Heart right ventricle (tissue), 16 donors: ENCODE measurements at regions of chr6 and their contacts with region 1.

Region 1: DNA sequence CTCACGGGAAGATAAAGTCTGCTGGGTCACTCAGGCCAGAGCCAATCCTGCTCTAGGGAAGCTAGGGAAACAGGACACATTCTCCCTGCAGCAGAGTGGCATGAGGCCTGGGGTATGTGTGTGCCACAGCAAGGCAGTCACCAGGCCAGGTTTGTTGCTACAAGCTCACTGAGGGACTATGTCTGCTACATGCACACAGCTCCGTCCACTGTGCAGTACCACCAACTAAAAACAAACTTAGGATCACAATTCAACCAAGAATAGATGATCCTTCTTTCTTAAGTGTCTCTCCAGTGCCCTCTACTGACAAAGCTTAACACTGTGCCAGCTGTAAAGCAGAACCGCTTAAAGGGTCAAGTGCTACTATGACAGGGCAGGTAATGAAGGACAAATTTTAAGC is 192.5 kb downstream of the PTPRK start:
- DNase-seq: no peak
- ATAC-seq: peak in 3 of 8 donors; percentile 38 to 49 (median 47)
- H3K4me3 ChIP-seq: no peak overlapping the region
- H3K27ac ChIP-seq: no peak overlapping the region
- H3K4me1 ChIP-seq: peaks cover 0 to 33% (median 1%) of the 10 kb centered on the region in 9 donors
- H3K27me3 ChIP-seq: no peaks in the 10 kb centered on the region
- CTCF ChIP-seq: peak in 8 of 9 donors; percentile 10 to 59 (median 42)

Region 2: DNA sequence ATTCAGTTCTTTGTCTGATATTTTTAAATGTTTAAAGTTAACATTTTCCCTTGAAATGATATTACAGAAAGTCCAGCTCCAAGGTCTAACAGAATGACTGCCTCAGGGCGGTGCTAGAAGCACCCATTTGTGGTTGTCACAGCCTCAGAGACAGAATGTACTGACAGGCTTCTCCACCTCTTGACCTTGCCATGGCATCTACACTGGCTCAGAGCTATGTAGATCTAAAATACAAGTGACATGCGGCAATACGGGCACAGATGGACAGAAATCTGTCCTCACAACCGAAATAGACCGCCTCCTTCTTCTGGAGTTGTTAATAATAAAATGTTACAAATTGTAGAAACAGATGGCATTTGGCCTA is 259.8 kb before region 1 on chr6:
- intact Hi-C with region 1: loop called in 1 of 10 experiments (anchors 10 kb)
- DNase-seq: peak in 1 of 2 donors; percentile 28
- ATAC-seq: peak; percentile 84 to 98 (median 94)
- H3K4me3 ChIP-seq: no peak overlapping the region
- H3K27ac ChIP-seq: peak overlapping the region in 5 of 10 donors; percentile 11 to 45 (median 36)
- H3K4me1 ChIP-seq: peaks cover 0 to 17% (median 5%) of the 10 kb centered on the region in 9 donors
- H3K27me3 ChIP-seq: no peaks in the 10 kb centered on the region
- CTCF ChIP-seq: peak in 5 of 9 donors; percentile 13 to 54 (median 44)

Region 3: DNA sequence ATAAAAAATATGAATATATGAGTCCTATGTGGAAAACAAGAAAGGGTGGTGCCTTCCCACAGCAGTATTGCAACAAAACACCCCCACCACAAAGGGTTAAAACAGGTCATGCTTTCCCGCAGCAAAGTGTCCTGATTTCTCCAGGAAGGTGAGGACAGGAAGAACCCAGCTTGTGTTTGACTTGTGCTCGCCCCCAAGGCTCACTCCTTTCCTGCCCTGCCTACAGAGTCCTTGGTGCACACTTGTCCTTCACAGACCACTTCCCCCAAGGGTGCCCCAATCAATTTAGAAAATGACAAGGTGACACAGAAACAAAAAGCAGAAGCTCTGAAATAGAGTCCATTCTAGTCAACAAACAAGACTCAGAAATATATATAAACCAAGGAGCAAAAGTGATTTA is 44.9 kb before region 1 on chr6:
- intact Hi-C with region 1: loop called in 1 of 10 experiments (anchors 5 kb)
- DNase-seq: no peak
- ATAC-seq: peak in 5 of 8 donors; percentile 43 to 73 (median 65)
- H3K4me3 ChIP-seq: no peak overlapping the region
- H3K27ac ChIP-seq: peak overlapping the region in 1 of 10 donors; percentile 11
- H3K4me1 ChIP-seq: peaks cover 0 to 39% (median 22%) of the 10 kb centered on the region in 9 donors
- H3K27me3 ChIP-seq: no peaks in the 10 kb centered on the region
- CTCF ChIP-seq: no peak

Region 4: GRCh38 chr6:128358244-128358776 is 30.4 kb after region 1 on chr6:
- intact Hi-C with region 1: no loop called
- DNase-seq: no peak
- ATAC-seq: peak in 4 of 8 donors; percentile 16 to 61 (median 42)
- H3K4me3 ChIP-seq: no peak overlapping the region
- H3K27ac ChIP-seq: peak overlapping the region in 6 of 10 donors; percentile 15 to 71 (median 63)
- H3K4me1 ChIP-seq: peaks cover 0 to 32% (median 19%) of the 10 kb centered on the region in 9 donors
- H3K27me3 ChIP-seq: no peaks in the 10 kb centered on the region
- CTCF ChIP-seq: no peak

Region 5: GRCh38 chr6:129381885-129382284 is 1054.0 kb after region 1 on chr6:
- intact Hi-C with region 1: no loop called
- DNase-seq: no peak
- ATAC-seq: peak in 4 of 8 donors; percentile 38 to 69 (median 47)
- H3K4me3 ChIP-seq: no peak overlapping the region
- H3K27ac ChIP-seq: peak overlapping the region in 2 of 10 donors; percentile 13
- H3K4me1 ChIP-seq: peaks cover 0 to 20% (median 0%) of the 10 kb centered on the region in 9 donors
- H3K27me3 ChIP-seq: no peaks in the 10 kb centered on the region
- CTCF ChIP-seq: no peak